Heart left ventricle (tissue), 16 donors: ENCODE measurements at regions of chr13 and their contacts with region 1.

Region 1: DNA sequence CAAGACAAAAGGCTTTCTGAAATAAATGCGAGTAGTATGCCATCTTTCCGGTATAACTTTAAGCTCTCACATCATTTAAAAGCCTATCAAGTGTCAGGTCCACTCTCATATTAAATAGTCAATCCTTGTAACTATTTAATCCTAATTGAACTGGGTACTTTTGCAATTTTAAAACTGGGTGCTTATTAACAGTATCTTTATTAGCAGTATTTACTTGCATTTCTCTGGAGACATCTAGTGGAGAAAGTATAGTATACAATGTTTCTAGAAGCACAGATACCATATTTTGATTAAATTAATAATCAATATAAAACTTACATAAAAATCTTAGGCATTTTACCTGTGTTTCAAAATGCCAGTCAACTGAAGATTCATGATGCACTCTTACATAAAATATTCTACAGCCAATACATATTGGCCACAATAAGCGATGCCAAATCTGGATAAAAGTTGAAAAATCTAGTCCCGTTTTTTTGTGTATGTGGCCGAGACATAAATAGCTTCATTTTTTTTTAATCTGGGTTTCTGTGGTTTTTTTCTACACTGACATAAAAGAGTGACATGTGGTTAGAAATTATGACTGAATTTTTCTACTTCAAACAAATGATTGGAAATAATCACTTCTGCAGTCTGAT is 4.3 kb upstream of the POSTN start:
- DNase-seq: no peak
- ATAC-seq: peak in 1 of 4 donors; percentile 63
- H3K4me3 ChIP-seq: no peak overlapping the region
- H3K27ac ChIP-seq: no peak overlapping the region
- H3K4me1 ChIP-seq: peaks cover 0 to 15% (median 0%) of the 10 kb centered on the region in 12 donors
- H3K27me3 ChIP-seq: no peaks in the 10 kb centered on the region
- CTCF ChIP-seq: peak; percentile 36 to 75 (median 66)
- POLR2A ChIP-seq: no peak

Region 2: GRCh38 chr13:37074703-37075102 is 528.2 kb before region 1 on chr13:
- intact Hi-C with region 1: loop called in 7 of 10 experiments (anchors 1 to 10 kb)
- DNase-seq: no peak
- ATAC-seq: peak in 2 of 4 donors; percentile 39 to 55
- H3K4me3 ChIP-seq: no peak overlapping the region
- H3K27ac ChIP-seq: no peak overlapping the region
- H3K4me1 ChIP-seq: no peaks in the 10 kb centered on the region
- H3K27me3 ChIP-seq: no peaks in the 10 kb centered on the region
- CTCF ChIP-seq: peak in 11 of 12 donors; percentile 28 to 60 (median 47)
- POLR2A ChIP-seq: no peak

Region 3: GRCh38 chr13:37752146-37752545 is 149.3 kb after region 1 on chr13:
- intact Hi-C with region 1: no loop called
- DNase-seq: no peak
- ATAC-seq: no peak
- H3K4me3 ChIP-seq: no peak overlapping the region
- H3K27ac ChIP-seq: no peak overlapping the region
- H3K4me1 ChIP-seq: no peaks in the 10 kb centered on the region
- H3K27me3 ChIP-seq: no peaks in the 10 kb centered on the region
- CTCF ChIP-seq: no peak
- POLR2A ChIP-seq: no peak

Region 4: DNA sequence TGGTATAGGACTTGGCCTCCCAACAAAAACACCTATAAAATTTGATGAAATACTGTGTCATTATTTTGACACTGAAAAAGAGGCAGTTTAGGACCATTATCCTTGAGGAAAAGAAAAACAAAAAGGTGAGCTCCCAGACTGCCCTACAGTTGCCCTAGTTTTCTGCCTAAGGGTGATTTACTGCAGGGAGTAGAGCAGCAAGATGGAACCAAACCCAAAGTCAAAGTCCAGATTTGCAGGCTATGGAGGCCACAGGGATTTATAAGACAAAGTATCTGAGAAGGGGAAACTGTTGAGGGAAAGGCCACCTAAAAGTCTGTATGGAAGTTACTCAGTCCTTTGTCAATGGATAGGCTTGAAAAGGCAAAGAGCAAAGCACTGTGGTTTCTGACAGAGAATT is 379.1 kb after region 1 on chr13:
- intact Hi-C with region 1: no loop called
- DNase-seq: no peak
- ATAC-seq: no peak
- H3K4me3 ChIP-seq: no peak overlapping the region
- H3K27ac ChIP-seq: no peak overlapping the region
- H3K4me1 ChIP-seq: no peaks in the 10 kb centered on the region
- H3K27me3 ChIP-seq: no peaks in the 10 kb centered on the region
- CTCF ChIP-seq: no peak
- POLR2A ChIP-seq: no peak